ENCODE measurements at regions of chr1 and their contacts with region 1.

Region 1: DNA sequence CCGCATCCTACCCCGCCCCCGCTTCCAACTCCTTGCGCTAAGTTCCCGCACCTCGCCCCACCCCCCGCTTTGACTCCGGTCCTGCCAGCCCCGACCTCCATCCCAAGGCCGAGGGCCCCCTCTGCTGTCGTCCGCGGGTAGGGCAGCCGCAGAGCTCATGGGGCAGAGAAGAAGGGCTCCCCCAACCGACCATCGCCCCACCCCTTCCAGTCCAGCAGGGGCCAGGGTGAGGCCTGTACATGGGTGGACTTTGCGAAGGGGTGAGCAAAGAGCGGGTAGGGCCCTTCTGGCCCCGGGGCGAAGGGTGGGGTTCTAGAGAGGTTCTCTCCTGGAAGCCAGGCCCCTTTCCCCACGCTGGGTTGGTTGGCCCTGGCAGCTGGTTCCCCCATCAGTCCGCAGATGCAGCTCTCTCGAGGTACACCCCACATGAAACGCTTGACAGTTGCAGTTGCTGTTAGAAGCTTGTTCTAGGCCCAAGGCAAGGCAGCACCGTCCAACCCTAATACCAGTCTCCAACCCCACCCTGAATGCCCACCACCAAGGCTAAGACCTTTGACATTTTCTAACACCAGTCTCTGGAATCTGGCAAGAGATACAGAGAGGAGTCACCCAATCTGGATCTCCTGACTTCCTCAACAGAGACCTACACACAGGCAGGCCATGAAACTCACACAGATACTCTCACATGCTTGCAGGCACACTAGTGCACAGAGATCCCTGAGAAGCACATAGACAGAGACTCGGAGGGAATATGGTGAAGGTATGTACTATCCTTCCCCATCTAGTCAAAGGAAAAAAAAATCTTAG is 25.3 kb upstream of the ADGRB2 start:
- DNase-seq: peak; percentile 86 to 96
- H3K4me3 ChIP-seq: peak overlapping the region; percentile 65
- H3K27ac ChIP-seq: no peak overlapping the region
- H3K4me1 ChIP-seq: peaks cover 10% of the 10 kb centered on the region; the same call in 1 of the 2 replicates
- H3K27me3 ChIP-seq: no peaks in the 10 kb centered on the region
- CTCF ChIP-seq: peak; percentile 100

Region 2: DNA sequence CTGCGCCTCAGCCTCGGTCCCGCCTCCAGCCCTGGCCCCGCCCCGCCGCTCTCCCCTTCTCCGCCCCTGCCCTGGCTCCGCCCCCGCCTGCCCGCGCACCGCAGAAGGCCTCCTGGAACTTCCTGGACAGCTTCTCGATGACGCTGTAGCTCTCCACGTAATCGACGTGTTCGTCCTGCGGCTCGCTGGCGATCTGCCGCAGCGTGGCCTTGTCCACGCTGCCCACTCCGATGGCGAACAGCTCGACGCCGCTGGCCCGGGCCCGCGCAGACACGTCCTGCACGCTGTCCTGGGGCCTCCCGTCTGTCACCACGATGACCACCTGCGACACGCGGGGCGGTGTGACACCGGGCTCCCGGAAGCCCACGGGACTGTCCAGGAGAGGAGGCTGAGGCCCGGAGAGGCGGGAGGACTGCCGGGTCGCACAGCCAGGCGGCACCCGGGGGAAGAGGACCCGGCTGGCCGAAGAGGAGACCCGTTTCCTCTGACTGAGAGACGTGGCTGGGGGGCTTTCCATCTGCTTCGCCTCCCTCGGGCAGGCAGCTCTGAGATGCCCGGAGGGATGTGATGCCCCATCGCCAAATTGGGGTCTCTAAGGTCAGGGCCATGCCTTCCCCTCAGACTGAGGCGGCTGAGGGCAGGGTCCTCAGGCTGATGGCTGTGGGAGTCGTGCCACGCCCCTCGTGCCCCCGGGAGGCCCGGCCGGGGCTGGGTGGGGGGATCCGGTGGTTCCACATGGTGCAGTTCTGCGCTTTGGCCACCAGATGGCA is 1070.6 kb before region 1 on chr1:
- CTCF ChIA-PET with region 1: interaction called, 3 read pairs
- POLR2A ChIA-PET with region 1: no interaction called
- intact Hi-C with region 1: loop called (anchors 2 kb)
- DNase-seq: peak; percentile 79 to 96
- H3K4me3 ChIP-seq: peak overlapping the region; percentile 77
- H3K27ac ChIP-seq: peak overlapping the region; percentile 83
- H3K4me1 ChIP-seq: 0 out of 2 replicates have a peak, but pooled peaks cover 5% of the 10 kb centered on the region
- H3K27me3 ChIP-seq: no peaks in the 10 kb centered on the region
- CTCF ChIP-seq: peak; percentile 95

Region 3: DNA sequence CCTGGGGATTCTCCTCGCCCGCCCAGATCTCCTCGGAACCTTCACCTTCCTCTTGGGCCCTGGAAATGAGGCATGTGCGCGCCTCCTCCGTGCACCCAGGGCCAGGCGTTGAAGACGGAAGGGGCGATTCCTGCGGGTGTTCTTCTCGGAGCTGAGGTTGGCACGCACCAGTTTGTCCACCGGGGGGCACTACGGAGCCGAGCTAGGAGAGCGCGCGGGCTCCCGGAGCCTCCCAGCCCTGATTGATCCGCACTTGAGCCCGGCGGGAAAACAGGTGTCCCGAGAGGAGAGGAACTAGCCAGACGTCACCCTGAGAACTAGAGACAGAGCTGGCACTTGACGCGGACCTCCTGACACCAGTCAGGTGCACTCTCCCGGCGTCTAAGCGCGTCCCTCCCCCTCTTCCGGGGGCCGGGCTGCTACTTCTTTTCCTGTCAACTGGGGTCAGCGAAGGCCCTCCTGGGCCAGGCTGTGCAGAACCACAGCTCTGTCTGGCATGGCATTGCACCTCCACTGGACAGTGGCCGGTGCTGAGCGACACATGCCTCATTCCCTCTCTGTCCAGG is 394.8 kb before region 1 on chr1:
- CTCF ChIA-PET with region 1: no interaction called
- POLR2A ChIA-PET with region 1: no interaction called
- intact Hi-C with region 1: loop called (anchors 1 kb)
- DNase-seq: peak; percentile 76 to 88
- H3K4me3 ChIP-seq: peak overlapping the region; percentile 33; the same call in 1 of the 2 replicates
- H3K27ac ChIP-seq: no peak overlapping the region
- H3K4me1 ChIP-seq: peaks cover 30% of the 10 kb centered on the region
- H3K27me3 ChIP-seq: no peaks in the 10 kb centered on the region
- CTCF ChIP-seq: peak; percentile 78

Region 4: GRCh38 chr1:31644560-31645273 is 144.7 kb before region 1 on chr1 and contains the start of gene PEF1:
- CTCF ChIA-PET with region 1: interaction called, 10 read pairs
- POLR2A ChIA-PET with region 1: no interaction called
- intact Hi-C with region 1: no loop called
- DNase-seq: peak; percentile 98 to 99
- H3K4me3 ChIP-seq: peak within 1 kb of the TSS; percentile 76
- H3K27ac ChIP-seq: peak within 1 kb of the TSS; percentile 81
- H3K4me1 ChIP-seq: peaks cover 36% of the 10 kb centered on the region
- H3K27me3 ChIP-seq: no peaks in the 10 kb centered on the region
- CTCF ChIP-seq: no peak
- total RNA-seq, gene PEF1: 40.3 and 44.5 TPM in 2 replicates

Region 5: DNA sequence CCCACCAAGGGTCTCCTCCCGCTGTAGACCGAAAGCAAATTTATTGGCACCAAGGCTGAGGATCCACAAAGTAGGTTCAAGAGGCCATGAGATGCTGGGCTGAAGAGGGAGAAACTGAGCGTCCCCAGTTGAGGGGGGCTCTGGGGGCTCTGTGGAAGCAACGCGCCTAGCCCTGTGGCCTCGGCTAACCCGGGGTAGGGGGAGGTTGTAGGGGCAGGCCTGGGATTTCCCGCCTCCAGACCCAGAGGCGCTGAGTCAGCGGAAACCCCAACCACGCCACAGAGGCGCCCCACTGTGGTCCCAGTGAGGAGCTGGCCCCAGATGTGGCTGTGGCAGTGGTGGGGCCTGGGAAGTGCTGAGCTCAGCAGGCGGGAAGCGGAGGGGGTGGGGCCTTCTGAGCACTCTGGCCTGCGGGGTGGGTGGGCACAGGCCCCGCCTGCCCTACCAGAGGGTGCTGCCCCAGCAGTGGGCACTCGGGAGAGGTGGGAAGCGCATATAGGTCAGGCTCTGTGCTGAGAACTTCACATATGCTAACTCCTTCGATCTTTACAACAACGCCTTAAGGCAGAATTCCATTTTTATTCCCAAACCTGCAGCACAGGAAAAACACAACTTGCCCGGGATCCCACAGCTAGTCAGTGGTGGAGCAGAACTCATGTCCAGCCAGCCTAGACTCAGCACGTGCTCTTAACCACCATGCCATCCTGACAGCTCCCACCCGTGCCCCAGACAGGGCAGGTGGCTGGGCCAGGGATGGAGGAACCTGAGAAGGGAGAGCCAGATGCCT is 84.2 kb before region 1 on chr1:
- CTCF ChIA-PET with region 1: interaction called, 12 read pairs
- POLR2A ChIA-PET with region 1: interaction called, 15 read pairs
- intact Hi-C with region 1: no loop called
- DNase-seq: no peak
- H3K4me3 ChIP-seq: no peak overlapping the region
- H3K27ac ChIP-seq: no peak overlapping the region
- H3K4me1 ChIP-seq: peaks cover 49% of the 10 kb centered on the region
- H3K27me3 ChIP-seq: no peaks in the 10 kb centered on the region
- CTCF ChIP-seq: peak; percentile 53; the same call in 1 of the 2 replicates

Region 6: DNA sequence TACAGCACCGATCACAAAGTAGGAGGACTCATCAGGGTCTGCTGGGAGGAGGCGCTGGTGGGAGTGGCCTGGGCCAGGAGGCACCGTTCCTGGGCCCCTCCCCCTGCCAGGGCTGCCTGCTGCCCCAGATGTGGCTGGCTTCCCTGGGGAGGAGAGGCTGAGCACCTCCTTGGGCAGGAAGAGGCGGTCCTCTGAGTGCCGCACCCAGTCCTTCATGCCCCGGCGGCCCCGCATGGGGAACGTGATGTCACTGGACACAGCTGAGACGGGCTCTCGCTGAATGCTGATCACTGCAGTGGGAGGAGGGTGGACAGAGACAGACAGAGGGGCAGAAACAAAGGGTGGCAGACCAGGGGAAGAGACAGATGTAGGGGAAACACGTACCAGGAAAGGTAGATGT is 50.1 kb before region 1 on chr1:
- CTCF ChIA-PET with region 1: no interaction called
- POLR2A ChIA-PET with region 1: no interaction called
- intact Hi-C with region 1: no loop called
- DNase-seq: no peak
- H3K4me3 ChIP-seq: no peak overlapping the region
- H3K27ac ChIP-seq: no peak overlapping the region
- H3K4me1 ChIP-seq: no peaks in the 10 kb centered on the region
- H3K27me3 ChIP-seq: no peaks in the 10 kb centered on the region
- CTCF ChIP-seq: no peak

Region 7: GRCh38 chr1:31762726-31763670 is 26.5 kb before region 1 on chr1:
- CTCF ChIA-PET with region 1: interaction called, 14 read pairs
- POLR2A ChIA-PET with region 1: no interaction called
- intact Hi-C with region 1: no loop called
- DNase-seq: peak; percentile 65 to 88
- H3K4me3 ChIP-seq: peak overlapping the region; percentile 62
- H3K27ac ChIP-seq: no peak overlapping the region
- H3K4me1 ChIP-seq: peaks cover 32% of the 10 kb centered on the region
- H3K27me3 ChIP-seq: peaks cover 5% of the 10 kb centered on the region; the same call in 1 of the 2 replicates
- CTCF ChIP-seq: peak; percentile 90

Region 8: GRCh38 chr1:32413507-32414185 is 624.2 kb after region 1 on chr1:
- CTCF ChIA-PET with region 1: no interaction called
- POLR2A ChIA-PET with region 1: no interaction called
- intact Hi-C with region 1: loop called (anchors 10 kb)
- DNase-seq: peak; percentile 50 to 63
- H3K4me3 ChIP-seq: no peak overlapping the region
- H3K27ac ChIP-seq: no peak overlapping the region
- H3K4me1 ChIP-seq: no peaks in the 10 kb centered on the region
- H3K27me3 ChIP-seq: 0 out of 2 replicates have a peak, but pooled peaks cover 7% of the 10 kb centered on the region
- CTCF ChIP-seq: peak; percentile 97

Measured in PC-9 (cell line).